ENCODE measurements at regions of chr7 and their contacts with region 1.

Region 1: GRCh38 chr7:38932509-38933168 is 23.6 kb upstream of the VPS41 start:
- DNase-seq: no peak
- H3K4me3 ChIP-seq: no peak overlapping the region
- H3K27ac ChIP-seq: no peak overlapping the region
- H3K4me1 ChIP-seq: no peaks in the 10 kb centered on the region
- H3K27me3 ChIP-seq: no peaks in the 10 kb centered on the region
- CTCF ChIP-seq: peak; percentile 56 to 72 (median 67)
- EP300 ChIP-seq: no peak
- POLR2A ChIP-seq: no peak

Region 2: GRCh38 chr7:39465055-39465929 is 532.7 kb after region 1 on chr7:
- intact Hi-C with region 1: loop called (anchors 2 kb)
- DNase-seq: peak; percentile 47
- H3K4me3 ChIP-seq: peak overlapping the region in 1 of 4 donors; percentile 1
- H3K27ac ChIP-seq: no peak overlapping the region
- H3K4me1 ChIP-seq: peaks cover 0 to 8% (median 3%) of the 10 kb centered on the region in 4 donors
- H3K27me3 ChIP-seq: no peaks in the 10 kb centered on the region
- CTCF ChIP-seq: peak; percentile 58 to 80 (median 70)
- EP300 ChIP-seq: no peak
- POLR2A ChIP-seq: no peak

Region 3: GRCh38 chr7:39527296-39527695 is 594.7 kb after region 1 on chr7:
- intact Hi-C with region 1: loop called (anchors 10 kb)
- DNase-seq: no peak
- H3K4me3 ChIP-seq: no peak overlapping the region
- H3K27ac ChIP-seq: no peak overlapping the region
- H3K4me1 ChIP-seq: no peaks in the 10 kb centered on the region
- H3K27me3 ChIP-seq: peaks cover 0 to 7% (median 0%) of the 10 kb centered on the region in 4 donors
- CTCF ChIP-seq: no peak
- EP300 ChIP-seq: no peak
- POLR2A ChIP-seq: no peak

Measured in esophagus muscularis mucosa (tissue), 4 donors.